HEK293 (cell line): ENCODE measurements at regions of chr15 and their contacts with region 1.

Region 1: GRCh38 chr15:99704444-99704838 is 28.8 kb downstream of the LYSMD4 start:
- H3K4me3 ChIP-seq: no peak overlapping the region
- H3K27ac ChIP-seq: no peak overlapping the region
- H3K4me1 ChIP-seq: peaks cover 7% of the 10 kb centered on the region
- CTCF ChIP-seq: peak; percentile 38; the same call in 1 of the 2 replicates

Region 2: GRCh38 chr15:99275525-99276128 is 428.8 kb before region 1 on chr15:
- CTCF ChIA-PET with region 1: interaction called, 142 read pairs
- POLR2A ChIA-PET with region 1: no interaction called
- H3K4me3 ChIP-seq: no peak overlapping the region
- H3K27ac ChIP-seq: no peak overlapping the region
- H3K4me1 ChIP-seq: peaks cover 6% of the 10 kb centered on the region; the same call in 1 of the 2 replicates
- CTCF ChIP-seq: no peak

Region 3: GRCh38 chr15:99305761-99306505 is 398.5 kb before region 1 on chr15:
- CTCF ChIA-PET with region 1: interaction called, 13 read pairs
- POLR2A ChIA-PET with region 1: no interaction called
- H3K4me3 ChIP-seq: no peak overlapping the region; the same call in 1 of the 2 replicates
- H3K27ac ChIP-seq: peak overlapping the region; percentile 75; the same call in 1 of the 2 replicates
- H3K4me1 ChIP-seq: peaks cover 33% of the 10 kb centered on the region
- CTCF ChIP-seq: no peak

Region 4: DNA sequence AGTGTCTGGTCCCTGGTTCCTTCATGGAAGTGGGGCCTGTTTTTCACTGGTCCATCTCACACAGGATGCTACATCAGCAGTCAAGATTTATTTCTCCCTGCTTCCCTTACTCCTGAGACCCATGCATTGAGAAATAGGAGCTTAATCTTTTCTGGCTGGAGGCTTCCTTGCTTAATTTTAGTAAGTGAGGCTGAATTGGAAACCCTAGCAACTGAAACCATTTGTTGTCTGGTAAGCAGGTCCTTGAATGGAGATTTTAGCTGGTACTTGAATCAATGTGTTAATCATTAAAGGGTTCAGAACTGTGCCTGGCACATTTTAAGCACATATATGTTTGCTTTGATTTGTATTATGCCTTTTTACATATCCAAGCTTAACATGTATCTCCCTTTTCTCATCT is 158.8 kb before region 1 on chr15:
- CTCF ChIA-PET with region 1: interaction called, 14 read pairs
- POLR2A ChIA-PET with region 1: no interaction called
- H3K4me3 ChIP-seq: no peak overlapping the region
- H3K27ac ChIP-seq: no peak overlapping the region
- H3K4me1 ChIP-seq: no peaks in the 10 kb centered on the region
- CTCF ChIP-seq: no peak

Region 5: GRCh38 chr15:99682455-99682854 is 22.0 kb before region 1 on chr15:
- CTCF ChIA-PET with region 1: interaction called, 14 read pairs
- POLR2A ChIA-PET with region 1: no interaction called
- H3K4me3 ChIP-seq: no peak overlapping the region
- H3K27ac ChIP-seq: no peak overlapping the region
- H3K4me1 ChIP-seq: peaks cover 12% of the 10 kb centered on the region
- CTCF ChIP-seq: no peak

Region 6: GRCh38 chr15:99733268-99734039 is 29.0 kb after region 1 on chr15 and contains the start of gene LYSMD4:
- CTCF ChIA-PET with region 1: interaction called, 9 read pairs
- POLR2A ChIA-PET with region 1: interaction called, 11 read pairs
- H3K4me3 ChIP-seq: peak within 1 kb of the TSS; percentile 81
- H3K27ac ChIP-seq: peak within 1 kb of the TSS; percentile 67
- H3K4me1 ChIP-seq: peaks cover 5% of the 10 kb centered on the region; the same call in 1 of the 2 replicates
- CTCF ChIP-seq: no peak

Region 7: DNA sequence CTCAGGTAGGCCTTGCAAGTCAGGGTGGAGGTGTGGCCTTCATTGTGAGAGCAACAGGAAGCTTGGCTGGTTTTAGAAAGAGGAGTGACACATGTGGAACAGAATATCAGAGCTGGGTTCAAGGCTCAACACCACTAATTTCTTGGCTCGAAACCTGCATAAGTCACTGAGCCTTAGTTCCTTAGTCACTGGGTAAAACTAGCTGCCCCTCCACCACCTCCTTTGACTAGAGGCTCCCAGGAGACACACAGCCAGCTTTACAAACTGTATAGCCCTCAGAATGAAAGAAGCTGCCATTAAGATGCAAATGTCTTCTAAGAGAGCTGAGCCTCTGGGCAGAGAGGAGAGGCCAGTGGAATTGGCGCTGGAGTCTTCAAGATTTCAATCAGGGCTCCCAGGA is 756.6 kb after region 1 on chr15:
- CTCF ChIA-PET with region 1: no interaction called
- POLR2A ChIA-PET with region 1: no interaction called
- H3K4me3 ChIP-seq: no peak overlapping the region
- H3K27ac ChIP-seq: no peak overlapping the region
- H3K4me1 ChIP-seq: no peaks in the 10 kb centered on the region
- CTCF ChIP-seq: no peak